ENCODE measurements at regions of chrX and their contacts with region 1.

Region 1: DNA sequence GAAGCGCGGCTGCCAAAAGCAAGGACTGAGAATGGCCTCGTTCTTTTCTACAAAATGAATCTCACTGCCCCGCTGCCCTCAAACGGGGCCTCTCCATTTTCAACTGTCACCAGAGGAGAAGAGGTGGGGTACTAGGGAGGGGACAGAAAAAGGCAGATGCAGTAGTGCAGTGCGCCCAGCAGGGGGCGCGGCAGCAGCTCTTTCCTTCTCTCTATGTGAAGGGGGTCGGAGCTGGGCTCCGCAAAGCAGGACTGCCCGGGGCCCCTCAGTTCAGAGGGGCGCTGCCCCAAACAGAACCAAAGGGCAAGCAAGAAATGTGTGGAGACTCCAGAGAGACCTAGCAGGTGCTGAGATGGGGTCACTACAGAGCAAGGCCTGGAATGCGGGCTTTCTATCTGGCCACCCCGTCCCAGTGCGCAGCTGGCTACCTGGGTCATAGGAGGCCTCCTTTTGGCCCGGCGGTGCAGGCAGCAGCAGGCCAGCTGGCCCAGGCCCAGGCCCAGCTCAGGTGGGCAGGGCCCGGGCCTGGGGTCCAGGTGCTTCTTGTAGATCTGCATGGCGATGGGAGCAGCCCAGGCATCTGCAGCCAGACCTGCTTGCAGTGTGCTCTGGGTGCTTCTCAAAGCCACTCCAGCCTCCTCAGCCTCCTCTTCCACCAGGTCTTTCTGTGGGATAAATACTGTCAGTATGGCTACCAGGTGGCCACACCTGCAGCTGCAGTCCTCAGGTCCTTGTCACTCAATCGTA is 5.9 kb downstream of the IRAK1 start:
- DNase-seq: no peak
- H3K4me3 ChIP-seq: no peak overlapping the region
- H3K27me3 ChIP-seq: no peaks in the 10 kb centered on the region
- CTCF ChIP-seq: peak; percentile 81

Region 2: DNA sequence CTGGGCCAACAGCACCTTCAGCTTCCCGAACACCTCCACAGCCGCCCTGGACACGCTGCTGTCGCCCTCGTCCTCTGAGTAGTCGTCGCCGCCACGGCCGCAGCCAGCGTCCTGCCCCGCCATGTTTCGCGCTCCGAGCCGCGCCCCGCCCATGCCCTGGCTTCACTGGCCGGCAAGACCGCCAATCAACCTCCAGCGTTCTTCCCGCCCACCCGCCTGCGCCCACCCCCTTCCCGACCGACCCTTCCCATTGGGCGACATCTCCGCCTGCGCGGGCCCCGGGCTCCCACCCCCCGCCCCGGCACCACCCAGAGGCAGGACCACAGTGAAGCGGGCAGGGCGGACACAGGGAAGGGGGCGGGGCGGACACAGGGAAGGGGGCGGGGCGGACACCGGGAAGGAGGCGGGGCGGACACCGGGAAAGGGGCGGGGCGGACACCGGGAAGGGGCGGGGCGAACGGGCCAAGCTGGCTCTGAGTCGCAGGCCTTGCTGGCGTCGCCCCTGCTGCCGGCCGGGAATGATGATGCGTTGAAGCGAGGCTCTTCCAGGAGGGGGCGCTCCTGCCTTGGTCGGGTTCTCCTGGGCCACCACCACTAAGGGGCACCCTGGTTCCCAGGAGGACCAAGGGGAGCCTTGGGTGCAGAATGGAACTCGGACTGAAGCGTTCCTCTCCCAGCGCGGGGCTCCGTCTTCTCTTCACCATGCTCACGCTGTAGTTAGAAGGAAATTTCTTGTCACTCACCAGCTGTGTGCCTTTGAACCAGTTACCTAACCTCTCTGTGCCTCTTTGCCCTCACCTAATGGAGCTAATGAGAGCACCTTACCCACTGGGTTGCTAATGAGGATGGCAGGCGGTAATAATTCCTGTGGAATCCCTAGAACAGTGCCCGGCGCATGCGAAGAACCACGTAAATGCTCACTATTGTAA is 543.1 kb before region 1 on chrX and contains the start of gene HAUS7:
- CTCF ChIA-PET with region 1: no interaction called
- POLR2A ChIA-PET with region 1: no interaction called
- DNase-seq: no peak
- H3K4me3 ChIP-seq: peak within 1 kb of the TSS; percentile 60
- H3K27me3 ChIP-seq: no peaks in the 10 kb centered on the region
- CTCF ChIP-seq: peak; percentile 75
- polyA plus RNA-seq, gene HAUS7: 26.8 and 38.4 TPM in 2 replicates

Region 3: DNA sequence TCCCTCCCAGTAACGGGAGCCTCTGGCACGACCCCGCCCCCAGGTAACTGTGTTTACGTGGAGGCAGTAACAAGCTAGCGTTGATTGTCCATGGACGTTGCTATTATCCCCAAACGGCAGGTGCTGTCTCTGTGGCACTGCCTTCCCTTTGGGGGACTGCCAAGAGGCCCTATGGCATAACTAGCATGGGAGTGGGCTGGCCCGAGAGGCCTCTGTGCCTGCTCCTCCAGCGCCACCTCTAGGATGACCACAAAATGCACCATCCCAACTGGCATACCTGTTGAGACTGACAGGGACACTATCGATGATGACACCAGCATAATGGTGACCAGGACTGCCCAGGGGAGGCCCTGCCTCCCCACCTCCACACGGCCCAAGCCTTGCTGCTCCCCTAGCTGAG is 231.5 kb before region 1 on chrX:
- CTCF ChIA-PET with region 1: no interaction called
- POLR2A ChIA-PET with region 1: no interaction called
- DNase-seq: no peak
- H3K4me3 ChIP-seq: no peak overlapping the region
- H3K27me3 ChIP-seq: no peaks in the 10 kb centered on the region
- CTCF ChIP-seq: 0 out of 2 replicates have a peak, but pooled peaks have one; percentile 3

Region 4: DNA sequence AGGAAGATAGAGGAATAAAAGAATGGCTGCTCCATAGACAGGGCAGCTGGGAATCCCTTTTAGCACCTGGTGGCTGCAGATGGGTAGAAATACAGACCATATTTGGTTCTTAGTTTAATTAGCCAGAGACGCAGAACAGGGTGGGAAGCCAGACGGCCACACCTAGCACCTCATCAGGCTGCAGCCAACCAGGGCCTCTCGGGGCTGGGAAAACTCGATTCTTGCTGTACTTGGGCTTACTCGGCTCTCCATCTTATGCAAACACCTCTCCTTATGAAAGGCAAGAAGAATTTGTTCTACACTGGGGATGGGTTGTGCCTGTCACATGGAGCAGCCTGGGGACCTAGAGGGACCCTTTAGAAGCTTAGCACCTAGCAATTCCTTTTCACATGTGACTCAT is 13.7 kb before region 1 on chrX:
- CTCF ChIA-PET with region 1: interaction called, 10 read pairs
- POLR2A ChIA-PET with region 1: interaction called, 7 read pairs
- DNase-seq: no peak
- H3K4me3 ChIP-seq: no peak overlapping the region
- H3K27me3 ChIP-seq: no peaks in the 10 kb centered on the region
- CTCF ChIP-seq: no peak

Region 5: DNA sequence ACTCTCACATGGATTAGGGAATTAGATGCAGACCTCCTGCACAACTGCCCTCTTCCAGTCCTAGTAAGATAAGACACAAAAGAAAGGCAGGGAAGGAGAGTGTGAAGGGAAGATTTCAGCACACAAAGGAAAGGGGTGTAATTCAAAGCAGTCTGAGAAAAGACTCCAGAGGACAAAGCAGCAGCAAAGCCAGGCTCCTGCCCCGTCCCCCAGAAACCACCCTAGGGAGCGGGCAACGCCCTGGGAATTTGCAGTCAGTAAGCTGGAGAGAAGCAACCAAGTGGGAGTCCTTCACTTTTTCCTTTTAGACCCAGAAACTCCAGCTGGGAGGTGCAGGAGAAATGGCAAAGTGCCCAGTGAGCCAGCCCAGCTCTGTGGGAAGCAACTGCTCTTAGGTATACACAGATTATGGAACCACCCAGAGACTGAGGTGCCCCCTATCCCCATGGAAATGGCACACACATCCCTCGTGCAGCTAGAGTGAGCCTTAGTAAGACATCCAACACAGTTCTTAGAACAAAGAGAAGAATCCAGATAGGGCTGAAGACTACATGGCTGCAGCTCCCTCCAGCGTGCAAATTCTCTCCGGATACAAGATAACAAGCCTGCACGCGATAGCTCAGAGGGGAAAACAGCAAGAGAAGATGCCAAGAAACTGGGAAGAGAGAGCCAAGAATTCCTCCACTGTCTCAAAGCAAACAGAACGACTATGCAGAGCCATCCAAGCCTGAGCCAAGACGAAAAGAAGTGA is 32.4 kb after region 1 on chrX:
- CTCF ChIA-PET with region 1: interaction called, 13 read pairs
- POLR2A ChIA-PET with region 1: no interaction called
- DNase-seq: peak; percentile 74
- H3K4me3 ChIP-seq: no peak overlapping the region
- H3K27me3 ChIP-seq: no peaks in the 10 kb centered on the region
- CTCF ChIP-seq: peak; percentile 36

Region 6: GRCh38 chrX:154051201-154051810 is 37.5 kb after region 1 on chrX:
- CTCF ChIA-PET with region 1: interaction called, 13 read pairs
- POLR2A ChIA-PET with region 1: no interaction called
- DNase-seq: no peak
- H3K4me3 ChIP-seq: no peak overlapping the region
- H3K27me3 ChIP-seq: no peaks in the 10 kb centered on the region
- CTCF ChIP-seq: peak; percentile 71